Gastrocnemius medialis (tissue), 4 donors: ENCODE measurements at regions of chrX and their contacts with region 1.

Region 1: DNA sequence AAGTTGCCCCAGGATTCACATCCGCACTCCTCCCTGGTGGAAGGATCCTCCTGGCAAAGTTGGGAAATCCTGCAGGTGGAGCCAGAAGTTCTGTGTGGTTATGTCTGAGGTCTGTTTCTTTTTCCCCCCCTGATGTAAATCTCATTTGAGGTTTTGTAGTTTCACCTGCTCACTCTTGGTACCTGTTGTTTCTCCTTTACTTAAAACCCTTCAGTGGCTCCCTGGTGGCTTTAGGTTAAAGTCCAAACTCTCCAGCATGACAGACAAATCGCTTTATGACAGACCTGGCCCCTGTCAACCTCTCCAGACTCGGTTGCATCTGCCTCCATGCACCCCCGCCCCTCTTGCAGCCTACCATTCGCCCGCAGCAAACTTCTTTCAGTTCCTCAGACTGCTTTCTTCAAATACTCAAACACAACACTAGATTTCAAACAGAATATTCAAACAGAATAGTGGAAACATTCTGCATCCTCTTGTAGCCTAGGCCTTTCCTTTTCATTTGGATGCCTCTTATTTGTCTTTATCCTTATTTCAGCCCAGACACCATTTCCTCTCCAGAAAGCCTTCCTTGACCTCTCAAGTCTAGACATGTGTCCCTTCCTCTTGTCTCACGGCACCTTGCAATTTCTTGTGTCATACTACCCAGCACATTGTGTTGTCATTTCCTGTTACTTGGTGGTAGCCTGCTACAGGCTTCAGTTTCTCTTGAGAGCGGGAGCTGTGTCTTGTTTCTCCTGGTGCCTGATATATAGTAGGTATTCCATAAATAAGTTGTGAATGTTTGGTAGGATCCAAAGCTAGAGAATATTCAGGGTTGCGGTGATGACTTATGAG is 24.8 kb downstream of the IL13RA1 start:
- DNase-seq: no peak
- ATAC-seq: no peak
- H3K4me3 ChIP-seq: no peak overlapping the region
- H3K27ac ChIP-seq: no peak overlapping the region
- H3K4me1 ChIP-seq: no peaks in the 10 kb centered on the region
- H3K27me3 ChIP-seq: no peaks in the 10 kb centered on the region
- CTCF ChIP-seq: no peak
- POLR2A ChIP-seq: no peak

Region 2: GRCh38 chrX:118726887-118727739 is 25.1 kb before region 1 on chrX and contains the start of gene IL13RA1:
- in situ Hi-C with region 1: no loop called
- intact Hi-C with region 1: loop called (anchors 1 kb)
- DNase-seq: peak; percentile 46 to 81
- ATAC-seq: peak; percentile 83 to 85
- H3K4me3 ChIP-seq: peak within 1 kb of the TSS; percentile 55 to 69 (median 67)
- H3K27ac ChIP-seq: peak within 1 kb of the TSS; percentile 84 to 95 (median 88)
- H3K4me1 ChIP-seq: peaks cover 0 to 15% of the 10 kb centered on the region in 2 donors
- H3K27me3 ChIP-seq: no peaks in the 10 kb centered on the region
- CTCF ChIP-seq: no peak
- POLR2A ChIP-seq: peak; percentile 62 to 66
- total RNA-seq, gene IL13RA1: 20.8 to 25.0 (median 22.9) TPM